Right lobe of liver (tissue), 6 donors: ENCODE measurements at regions of chr16 and their contacts with region 1.

Region 1: GRCh38 chr16:8567750-8568617 is 22.3 kb downstream of the TMEM114 start:
- DNase-seq: peak; percentile 55 to 75 (median 68)
- ATAC-seq: peak; percentile 94 to 98 (median 97)
- H3K4me3 ChIP-seq: no peak overlapping the region
- H3K27ac ChIP-seq: no peak overlapping the region
- H3K4me1 ChIP-seq: no peaks in the 10 kb centered on the region
- H3K27me3 ChIP-seq: no peaks in the 10 kb centered on the region
- CTCF ChIP-seq: peak; percentile 94 to 99 (median 98)
- POLR2A ChIP-seq: no peak

Region 2: GRCh38 chr16:8323153-8323552 is 244.8 kb before region 1 on chr16:
- intact Hi-C with region 1: no loop called
- DNase-seq: no peak
- ATAC-seq: no peak
- H3K4me3 ChIP-seq: no peak overlapping the region
- H3K27ac ChIP-seq: no peak overlapping the region
- H3K4me1 ChIP-seq: no peaks in the 10 kb centered on the region
- H3K27me3 ChIP-seq: no peaks in the 10 kb centered on the region
- CTCF ChIP-seq: no peak
- POLR2A ChIP-seq: no peak

Region 3: DNA sequence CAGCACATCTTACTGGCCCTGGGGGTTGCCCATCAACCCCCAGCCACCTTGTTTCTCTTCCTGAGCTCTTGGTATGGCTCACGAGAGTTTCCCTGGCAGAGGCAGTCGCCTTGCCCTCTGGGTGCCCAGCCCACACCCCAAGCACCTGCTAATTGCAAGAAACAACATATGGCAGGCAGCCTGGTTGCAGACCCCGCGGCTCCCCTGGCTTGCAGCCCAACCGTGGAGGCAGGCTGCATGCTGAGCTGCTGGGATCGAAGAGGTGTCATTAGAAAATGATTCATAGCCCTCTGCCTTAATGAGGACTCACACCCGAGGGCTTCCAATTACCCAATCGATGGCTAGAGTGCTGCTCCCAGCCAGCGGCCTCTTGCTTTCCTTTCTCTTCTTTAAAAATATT is 93.4 kb before region 1 on chr16:
- intact Hi-C with region 1: no loop called
- DNase-seq: no peak
- ATAC-seq: no peak
- H3K4me3 ChIP-seq: no peak overlapping the region
- H3K27ac ChIP-seq: no peak overlapping the region
- H3K4me1 ChIP-seq: no peaks in the 10 kb centered on the region
- H3K27me3 ChIP-seq: no peaks in the 10 kb centered on the region
- CTCF ChIP-seq: no peak
- POLR2A ChIP-seq: no peak

Region 4: GRCh38 chr16:8655184-8655717 is 87.3 kb after region 1 on chr16:
- intact Hi-C with region 1: loop called in 1 of 2 experiments (anchors 5 kb)
- DNase-seq: no peak
- ATAC-seq: peak in 3 of 4 donors; percentile 76 to 92 (median 87)
- H3K4me3 ChIP-seq: no peak overlapping the region
- H3K27ac ChIP-seq: no peak overlapping the region
- H3K4me1 ChIP-seq: no peaks in the 10 kb centered on the region
- H3K27me3 ChIP-seq: no peaks in the 10 kb centered on the region
- CTCF ChIP-seq: peak in 3 of 4 donors; percentile 59 to 69 (median 65)
- POLR2A ChIP-seq: no peak